Ascending aorta (tissue), 2 donors: ENCODE measurements at regions of chr17 and their contacts with region 1.

Region 1: DNA sequence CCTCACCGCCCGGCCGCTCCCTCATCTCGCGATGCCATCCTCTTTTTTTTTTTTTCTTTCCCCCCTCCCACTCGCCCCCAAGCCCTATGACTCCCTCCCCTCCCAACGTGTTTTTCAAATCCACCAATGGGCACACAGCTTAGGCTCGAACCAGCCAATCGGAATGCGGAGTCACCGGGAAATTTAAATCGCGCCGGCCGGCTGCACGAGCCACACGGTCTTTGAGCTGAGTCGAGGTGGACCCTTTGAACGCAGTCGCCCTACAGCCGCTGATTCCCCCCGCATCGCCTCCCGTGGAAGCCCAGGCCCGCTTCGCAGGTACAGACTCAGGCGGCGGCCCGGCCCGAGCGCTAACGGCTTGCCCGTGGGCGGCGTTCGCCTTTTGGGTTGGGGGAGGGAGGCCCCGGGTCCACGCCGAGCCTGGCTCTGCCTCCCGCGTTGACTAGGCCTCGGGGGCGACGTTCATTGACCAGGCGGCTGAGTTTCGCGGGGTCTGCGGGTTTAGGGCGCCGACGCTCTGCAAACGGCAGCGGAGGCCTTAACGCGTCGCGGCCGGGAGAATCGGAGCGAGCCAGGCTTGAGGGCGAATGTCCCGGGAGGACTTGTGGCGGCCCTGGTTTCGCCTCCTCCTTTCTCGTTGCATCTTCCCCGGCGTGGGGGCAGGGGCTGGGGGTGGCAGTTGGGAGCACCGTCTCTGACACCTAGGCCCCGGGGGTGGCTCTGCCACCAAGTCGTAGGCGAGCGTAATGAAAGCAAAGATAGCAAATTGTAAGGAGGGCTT is at the start of gene KPNA2:
- DNase-seq: peak; percentile 78 to 95
- H3K4me3 ChIP-seq: peak within 1 kb of the TSS; percentile 90 to 97
- H3K27ac ChIP-seq: peak within 1 kb of the TSS; percentile 64 to 76
- H3K4me1 ChIP-seq: peaks cover 0 to 7% of the 10 kb centered on the region in 2 donors
- H3K27me3 ChIP-seq: no peaks in the 10 kb centered on the region
- CTCF ChIP-seq: no peak
- total RNA-seq, gene KPNA2: 11.6 TPM

Region 2: DNA sequence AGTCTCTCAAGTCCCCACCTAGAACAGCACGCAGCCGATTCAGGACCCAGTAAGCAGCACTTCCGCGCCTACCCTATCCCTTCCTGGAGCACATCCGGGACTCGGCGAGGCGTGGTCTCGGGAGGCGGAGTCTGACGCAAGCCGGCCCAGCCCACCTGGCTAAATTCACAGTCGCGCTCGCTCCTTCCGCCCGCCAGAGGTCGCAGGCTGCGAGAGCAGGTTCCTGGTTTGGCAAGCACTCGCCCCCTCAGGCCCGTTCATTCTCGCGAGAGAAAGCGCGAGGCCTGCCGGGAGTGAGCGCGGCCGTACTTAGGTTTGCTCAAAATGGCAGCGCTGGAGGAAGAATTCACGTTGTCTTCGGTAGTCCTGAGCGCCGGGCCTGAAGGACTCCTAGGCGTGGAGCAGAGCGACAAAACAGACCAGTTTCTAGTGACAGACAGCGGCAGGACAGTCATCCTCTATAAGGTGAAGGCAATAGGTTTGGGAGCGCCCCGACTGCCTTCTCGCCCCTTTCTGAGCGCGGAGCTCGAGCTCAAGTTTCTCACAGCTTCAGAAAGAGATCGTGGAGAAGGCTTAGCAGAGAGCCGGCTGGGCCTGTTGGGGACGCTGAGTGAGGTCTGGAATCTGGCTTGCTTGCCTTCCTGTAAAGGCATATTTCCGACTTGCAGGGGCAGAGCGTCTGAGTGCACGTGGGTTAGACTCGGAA is 317.9 kb before region 1 on chr17 and contains the start of gene NOL11:
- intact Hi-C with region 1: loop called (anchors 1 kb)
- DNase-seq: peak; percentile 95 to 100
- H3K4me3 ChIP-seq: peak within 1 kb of the TSS; percentile 91 to 97
- H3K27ac ChIP-seq: peak within 1 kb of the TSS; percentile 89 to 92
- H3K4me1 ChIP-seq: peaks cover 5 to 11% of the 10 kb centered on the region in 2 donors
- H3K27me3 ChIP-seq: no peaks in the 10 kb centered on the region
- CTCF ChIP-seq: peak; percentile 85 to 92 (median 87)
- total RNA-seq, gene NOL11: 22.0 TPM

Region 3: GRCh38 chr17:67824735-67825626 is 210.7 kb before region 1 on chr17 and contains the start of gene BPTF:
- intact Hi-C with region 1: loop called (anchors 5 kb)
- DNase-seq: peak; percentile 46 to 93
- H3K4me3 ChIP-seq: peak within 1 kb of the TSS; percentile 88 to 99
- H3K27ac ChIP-seq: peak within 1 kb of the TSS; percentile 85 to 99
- H3K4me1 ChIP-seq: peaks cover 0 to 15% of the 10 kb centered on the region in 2 donors
- H3K27me3 ChIP-seq: no peaks in the 10 kb centered on the region
- CTCF ChIP-seq: peak; percentile 72 to 98 (median 86)
- total RNA-seq, gene BPTF: 67.4 TPM

Region 4: GRCh38 chr17:67993596-67994361 is 41.9 kb before region 1 on chr17:
- intact Hi-C with region 1: loop called (anchors 1 kb)
- DNase-seq: no peak
- H3K4me3 ChIP-seq: peak overlapping the region; percentile 73 to 91
- H3K27ac ChIP-seq: peak overlapping the region; percentile 91 to 97
- H3K4me1 ChIP-seq: peaks cover 4 to 9% of the 10 kb centered on the region in 2 donors
- H3K27me3 ChIP-seq: no peaks in the 10 kb centered on the region
- CTCF ChIP-seq: no peak

Region 5: DNA sequence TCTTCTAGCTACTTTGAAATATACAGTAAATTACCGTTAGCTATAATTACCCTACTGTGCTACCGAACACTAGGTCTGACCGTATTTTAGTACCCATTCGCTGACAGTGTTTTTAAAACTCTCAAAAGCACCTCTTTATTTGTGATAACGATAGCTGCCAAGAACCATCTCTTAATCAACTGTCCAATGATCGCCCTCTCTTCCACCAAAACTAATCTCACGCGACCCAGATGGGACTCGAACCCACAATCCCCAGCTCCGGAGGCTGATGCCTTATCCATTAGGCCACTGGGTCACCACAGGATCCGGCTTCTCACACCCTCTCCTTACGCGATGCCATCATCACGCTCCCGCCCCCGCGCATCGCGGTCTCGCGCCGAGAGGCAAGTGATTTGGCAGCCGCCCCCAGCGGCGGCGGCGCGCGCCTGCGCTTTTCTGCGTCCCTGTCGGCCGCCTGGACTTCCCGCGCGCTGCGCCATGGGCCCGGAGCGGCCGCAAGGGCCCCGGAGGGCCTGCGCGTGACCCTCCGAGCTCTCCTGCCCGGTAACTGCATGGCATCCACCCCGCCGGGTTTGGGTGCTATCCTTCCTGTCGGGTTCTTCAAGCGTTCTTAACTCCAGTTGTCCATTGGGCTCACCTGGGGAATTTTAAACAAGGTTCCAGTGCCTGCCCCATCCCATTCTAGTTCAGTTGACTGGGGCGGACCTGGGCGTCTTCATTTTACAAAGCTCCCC is 15.9 kb before region 1 on chr17:
- intact Hi-C with region 1: loop called (anchors 1 kb)
- DNase-seq: peak; percentile 91 to 99
- H3K4me3 ChIP-seq: peak overlapping the region; percentile 55 to 74
- H3K27ac ChIP-seq: peak overlapping the region; percentile 79 to 87
- H3K4me1 ChIP-seq: peaks cover 0 to 3% of the 10 kb centered on the region in 2 donors
- H3K27me3 ChIP-seq: no peaks in the 10 kb centered on the region
- CTCF ChIP-seq: peak; percentile 20 to 62 (median 37)